Mucosa of descending colon (tissue), 3 donors: ENCODE measurements at regions of chr4 and their contacts with region 1.

Region 1: GRCh38 chr4:7802093-7802726 is 137.5 kb downstream of the AFAP1 start:
- DNase-seq: peak in 2 of 3 donors; percentile 79 to 90
- ATAC-seq: peak; percentile 90
- H3K4me3 ChIP-seq: no peak overlapping the region
- H3K4me1 ChIP-seq: peaks cover 10% of the 10 kb centered on the region
- CTCF ChIP-seq: peak; percentile 83

Region 2: DNA sequence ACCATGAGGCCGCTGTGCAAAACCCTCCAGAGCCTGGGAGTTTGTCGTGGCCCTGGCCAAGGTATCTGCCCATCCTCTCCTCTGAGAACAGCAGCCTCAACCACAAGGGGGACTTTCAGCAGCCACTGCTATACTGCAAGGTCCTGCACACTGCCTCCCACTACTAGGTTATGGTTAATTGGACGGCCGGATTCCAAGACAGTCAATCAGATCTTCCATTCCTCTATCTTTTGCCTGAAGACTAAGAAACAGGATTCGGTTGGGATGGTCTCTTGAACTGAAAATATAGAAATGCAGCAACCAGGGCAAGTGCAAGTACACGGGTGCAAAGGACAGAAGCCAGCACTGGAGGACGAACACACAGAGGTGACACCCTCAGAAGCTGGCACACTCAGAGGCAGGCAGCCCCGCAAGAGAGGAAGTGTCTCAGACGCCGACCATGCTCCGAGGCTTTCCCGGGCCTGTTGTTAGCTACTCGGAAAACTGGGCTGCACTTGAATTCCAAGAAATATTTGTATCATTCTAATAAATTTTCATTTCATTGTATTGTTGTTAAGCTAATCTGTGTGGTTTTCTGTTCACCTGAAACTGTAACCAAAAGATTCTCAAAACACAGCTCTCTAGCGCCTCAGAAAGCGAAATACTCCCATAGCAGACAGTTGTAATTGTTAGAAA is 74.1 kb after region 1 on chr4:
- intact Hi-C with region 1: no loop called
- DNase-seq: no peak
- ATAC-seq: peak; percentile 63
- H3K4me3 ChIP-seq: no peak overlapping the region
- H3K4me1 ChIP-seq: no peaks in the 10 kb centered on the region
- CTCF ChIP-seq: no peak

Region 3: DNA sequence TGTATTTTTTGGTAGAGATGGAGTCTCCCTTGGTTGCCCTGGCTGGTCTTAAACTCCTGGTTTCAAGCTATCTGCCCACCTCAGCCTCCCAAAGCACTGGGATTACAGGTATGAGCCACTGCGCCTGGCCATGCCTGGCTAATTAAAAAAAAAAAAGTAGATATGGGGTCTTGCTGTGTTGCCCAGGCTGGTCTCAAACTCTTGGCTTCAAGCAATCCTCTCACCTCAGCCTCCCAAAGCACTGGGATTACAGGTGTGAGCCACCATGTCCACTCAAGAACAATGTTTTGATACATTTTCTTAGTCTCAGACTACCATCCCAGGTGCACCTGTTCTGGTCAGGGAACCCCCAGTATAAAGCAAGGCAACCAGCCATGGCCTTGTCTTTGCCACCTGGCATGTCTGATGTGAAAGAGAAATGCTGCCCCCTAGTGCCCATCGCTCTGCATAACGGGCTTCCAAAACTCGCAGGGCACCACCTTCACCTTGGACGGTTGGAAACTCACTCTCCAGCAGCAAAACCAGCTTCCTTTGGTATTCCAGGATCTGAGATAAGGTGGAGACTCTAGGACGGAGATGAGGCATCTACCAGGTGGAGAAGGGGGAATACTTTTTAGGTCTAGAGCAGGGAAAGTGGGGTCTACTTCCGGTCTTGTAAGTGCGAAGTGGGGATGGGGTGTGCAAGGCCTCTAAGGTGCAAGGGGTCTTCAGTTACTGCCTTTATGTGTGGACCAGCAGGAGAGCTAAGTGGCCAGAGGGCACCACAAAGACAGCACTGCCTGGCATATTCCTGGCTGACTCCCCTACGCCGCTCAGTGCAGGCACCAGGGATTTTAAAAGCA is 185.2 kb after region 1 on chr4:
- intact Hi-C with region 1: loop called (anchors 5 kb)
- DNase-seq: peak in 2 of 3 donors; percentile 82 to 92
- ATAC-seq: peak; percentile 72
- H3K4me3 ChIP-seq: no peak overlapping the region
- H3K4me1 ChIP-seq: peaks cover 15% of the 10 kb centered on the region
- CTCF ChIP-seq: peak; percentile 70

Region 4: DNA sequence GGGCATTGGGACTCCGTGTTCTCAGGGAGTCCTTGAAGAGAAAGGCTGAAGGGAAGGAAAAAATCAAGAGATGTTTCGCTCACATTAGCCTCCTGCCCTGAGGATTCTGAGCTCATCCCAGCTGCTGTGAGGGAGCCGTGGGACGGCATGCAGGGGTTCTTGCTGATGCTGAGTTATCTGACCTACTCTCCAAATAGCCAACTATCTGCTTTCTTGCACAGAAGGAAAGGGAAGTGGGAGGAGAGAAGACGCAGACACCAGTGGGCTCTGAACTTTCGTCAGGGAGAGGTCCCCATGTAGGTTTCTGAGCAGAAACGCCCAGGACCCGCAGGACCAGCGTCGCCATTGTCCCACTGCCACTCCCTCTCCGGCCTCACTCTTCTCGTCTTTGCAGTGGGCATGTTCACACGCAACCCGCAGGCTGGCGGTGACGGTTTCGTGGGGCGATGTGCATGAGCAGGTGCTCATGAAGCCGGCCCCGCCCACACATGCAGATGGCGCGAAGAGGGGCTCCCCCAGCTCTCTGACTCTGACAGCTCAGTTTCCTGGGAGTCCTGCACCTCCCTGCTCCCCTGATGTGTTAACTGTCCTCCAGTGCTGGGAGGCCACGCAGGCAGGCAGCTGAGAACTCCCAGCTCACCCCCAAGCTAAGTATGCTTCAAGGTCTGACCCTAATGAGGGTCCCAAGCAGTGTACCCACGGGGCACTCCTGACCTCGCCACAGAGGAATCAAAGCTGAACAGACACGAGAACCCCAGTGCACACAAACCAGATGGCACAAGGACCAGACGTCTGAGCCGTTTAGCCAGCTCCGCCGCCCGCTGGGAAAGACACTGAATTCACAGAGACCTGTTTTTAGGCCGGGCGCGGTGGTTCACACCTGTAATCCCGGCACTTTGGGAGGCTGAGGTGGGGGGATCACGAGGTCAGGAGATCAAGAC is 370.0 kb after region 1 on chr4:
- intact Hi-C with region 1: no loop called
- DNase-seq: no peak
- ATAC-seq: no peak
- H3K4me3 ChIP-seq: no peak overlapping the region
- H3K4me1 ChIP-seq: no peaks in the 10 kb centered on the region
- CTCF ChIP-seq: no peak